Endothelial cell of umbilical vein (primary cell): ENCODE measurements at regions of chr18 and their contacts with region 1.

Region 1: GRCh38 chr18:23270986-23271680 is 135.8 kb downstream of the CABLES1 start:
- DNase-seq: peak; percentile 71
- H3K4me3 ChIP-seq: no peak overlapping the region
- H3K27ac ChIP-seq: peak overlapping the region; percentile 25
- H3K4me1 ChIP-seq: peaks cover 14% of the 10 kb centered on the region
- H3K27me3 ChIP-seq: no peaks in the 10 kb centered on the region
- CTCF ChIP-seq: no peak
- POLR2A ChIP-seq: no peak

Region 2: DNA sequence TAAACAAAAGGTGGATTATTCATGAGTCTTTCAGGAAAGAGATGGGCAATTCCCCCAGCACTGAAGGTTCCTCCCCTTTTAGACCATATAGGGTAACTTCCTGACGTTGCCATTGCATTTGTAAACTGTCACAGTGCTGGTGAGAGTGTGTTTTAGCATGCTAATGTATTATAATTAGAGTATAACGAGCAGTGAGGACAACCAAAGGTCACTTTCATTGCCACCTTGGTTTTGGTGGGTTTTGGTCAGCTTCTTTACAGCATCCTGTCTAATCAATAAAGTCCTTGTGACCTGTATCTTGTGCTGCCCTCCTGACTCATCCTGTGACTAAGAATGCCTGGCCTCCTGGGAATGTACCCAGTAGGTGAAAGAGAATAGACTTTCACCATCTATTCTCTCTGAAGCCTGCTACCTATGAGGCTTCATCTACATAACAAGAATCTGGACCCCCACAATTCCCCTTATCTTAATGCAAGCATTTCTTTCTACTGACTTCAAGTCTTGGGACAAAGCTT is 12.8 kb after region 1 on chr18:
- CTCF ChIA-PET with region 1: interaction called, 3 read pairs
- POLR2A ChIA-PET with region 1: no interaction called
- dilution Hi-C with region 1: no loop called
- intact Hi-C with region 1: loop called (anchors 1 kb)
- DNase-seq: peak; percentile 52
- H3K4me3 ChIP-seq: no peak overlapping the region
- H3K27ac ChIP-seq: no peak overlapping the region
- H3K4me1 ChIP-seq: peaks cover 41% of the 10 kb centered on the region
- H3K27me3 ChIP-seq: no peaks in the 10 kb centered on the region
- CTCF ChIP-seq: no peak
- POLR2A ChIP-seq: no peak